ENCODE measurements at regions of chr2 and their contacts with region 1.

Region 1: GRCh38 chr2:157302492-157303099 is 23.0 kb downstream of the ERMN start:
- DNase-seq: peak; percentile 51
- H3K4me3 Mint-ChIP-seq: peak overlapping the region; percentile 3
- H3K27ac Mint-ChIP-seq: no peak overlapping the region
- H3K4me1 Mint-ChIP-seq: peaks cover 34% of the 10 kb centered on the region
- H3K27me3 Mint-ChIP-seq: no peaks in the 10 kb centered on the region

Region 2: DNA sequence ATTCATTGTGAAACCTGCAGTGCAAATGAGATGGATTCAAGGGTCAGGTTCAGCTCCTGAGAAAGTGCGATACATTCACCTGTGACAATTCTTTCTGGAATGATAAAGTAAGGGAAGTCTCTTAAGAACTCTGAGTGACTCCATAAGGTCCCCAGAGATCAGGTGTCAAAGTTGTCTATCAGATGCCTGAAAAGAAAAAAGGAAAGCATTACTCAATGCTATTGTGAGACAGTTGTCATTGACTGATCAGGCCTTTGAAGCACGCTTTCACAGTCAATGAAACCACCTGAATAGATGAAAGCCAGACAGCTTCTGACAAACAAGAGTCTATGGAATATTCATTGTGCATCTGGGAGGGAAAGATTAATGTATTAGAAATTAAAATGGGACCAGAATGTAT is 297.8 kb before region 1 on chr2:
- CTCF ChIA-PET with region 1: no interaction called
- intact Hi-C with region 1: no loop called
- DNase-seq: no peak
- H3K4me3 Mint-ChIP-seq: no peak overlapping the region
- H3K27ac Mint-ChIP-seq: no peak overlapping the region
- H3K4me1 Mint-ChIP-seq: no peaks in the 10 kb centered on the region
- H3K27me3 Mint-ChIP-seq: no peaks in the 10 kb centered on the region

Region 3: DNA sequence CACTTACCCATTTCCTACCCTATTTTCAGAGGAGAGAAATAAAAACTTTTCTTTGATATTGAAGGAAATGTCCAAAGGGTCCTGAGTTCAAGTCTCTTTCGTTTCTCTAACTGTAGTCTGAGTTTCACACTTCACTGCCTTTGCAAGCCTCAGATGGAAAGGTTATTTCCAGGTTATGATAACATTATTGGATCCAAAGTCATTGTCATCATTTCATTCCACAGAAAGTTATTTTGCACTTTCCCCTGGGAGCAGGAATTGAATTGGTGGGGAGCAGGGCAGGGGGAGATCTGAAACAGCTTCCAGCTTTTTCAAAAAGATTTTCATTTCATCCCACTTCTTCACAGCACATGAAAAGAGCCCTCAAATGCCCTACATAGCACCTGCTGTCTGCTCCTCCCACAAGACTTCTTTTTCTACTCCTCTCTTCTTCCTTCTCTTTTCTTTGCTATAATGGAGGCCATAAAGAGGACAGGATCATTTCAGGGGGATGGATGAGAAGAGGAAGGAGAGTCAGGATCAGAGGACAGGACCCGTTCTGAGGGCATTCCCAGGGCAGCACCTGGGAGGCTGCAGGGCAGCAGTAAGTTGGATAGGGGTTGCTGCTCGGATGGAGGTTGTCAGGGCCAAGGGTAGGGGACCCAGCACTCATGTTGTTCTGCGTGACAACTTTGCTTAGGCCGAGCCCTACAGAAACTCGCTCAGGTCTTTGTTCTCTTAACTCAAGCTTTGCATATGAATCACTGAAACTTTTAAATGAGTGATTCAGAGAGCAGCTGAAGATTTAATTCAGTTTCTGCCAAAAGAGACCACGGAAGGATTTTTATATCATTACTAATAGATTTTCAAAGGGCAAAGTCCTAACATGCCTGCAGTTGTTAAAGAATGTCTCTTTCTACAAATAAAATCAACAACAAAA is 56.5 kb before region 1 on chr2:
- CTCF ChIA-PET with region 1: no interaction called
- intact Hi-C with region 1: loop called (anchors 2 kb)
- DNase-seq: peak; percentile 49
- H3K4me3 Mint-ChIP-seq: no peak overlapping the region
- H3K27ac Mint-ChIP-seq: no peak overlapping the region
- H3K4me1 Mint-ChIP-seq: peaks cover 18% of the 10 kb centered on the region
- H3K27me3 Mint-ChIP-seq: peaks cover 7% of the 10 kb centered on the region

Region 4: DNA sequence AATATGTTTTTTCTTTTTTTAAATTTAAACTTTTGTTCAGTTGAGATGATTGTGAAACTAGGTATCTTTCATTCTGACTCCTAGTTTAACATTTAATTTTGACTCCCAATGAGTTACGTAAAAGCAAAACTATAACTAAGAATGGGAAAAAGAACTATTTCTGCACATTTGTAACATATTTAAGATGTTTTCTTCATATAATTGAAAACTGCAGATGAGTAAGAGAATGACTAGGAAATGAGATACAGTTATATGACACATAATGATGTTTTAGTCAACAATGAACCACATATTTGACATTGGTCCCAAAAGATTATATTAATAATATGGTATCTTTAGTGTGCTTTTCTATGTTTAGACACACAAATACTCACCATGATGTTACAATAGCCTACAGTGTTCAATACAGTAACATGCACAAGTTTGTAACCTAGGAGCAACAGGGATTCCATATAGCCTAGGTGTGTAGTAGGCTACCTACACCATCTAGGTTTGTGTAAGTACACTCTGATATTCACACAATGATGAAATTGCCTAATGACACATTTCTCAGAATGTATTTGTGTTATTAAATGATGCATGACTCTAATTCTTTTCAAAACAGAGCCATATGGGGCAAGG is 10.4 kb after region 1 on chr2:
- CTCF ChIA-PET with region 1: interaction called, 16 read pairs
- intact Hi-C with region 1: no loop called
- DNase-seq: peak; percentile 17
- H3K4me3 Mint-ChIP-seq: no peak overlapping the region
- H3K27ac Mint-ChIP-seq: peak overlapping the region; percentile 41
- H3K4me1 Mint-ChIP-seq: peaks cover 49% of the 10 kb centered on the region
- H3K27me3 Mint-ChIP-seq: no peaks in the 10 kb centered on the region

Region 5: GRCh38 chr2:157497638-157498314 is 195.2 kb after region 1 on chr2:
- CTCF ChIA-PET with region 1: interaction called, 142 read pairs
- intact Hi-C with region 1: loop called (anchors 1 kb)
- DNase-seq: peak; percentile 25
- H3K4me3 Mint-ChIP-seq: no peak overlapping the region
- H3K27ac Mint-ChIP-seq: no peak overlapping the region
- H3K4me1 Mint-ChIP-seq: peaks cover 23% of the 10 kb centered on the region
- H3K27me3 Mint-ChIP-seq: no peaks in the 10 kb centered on the region

Region 6: DNA sequence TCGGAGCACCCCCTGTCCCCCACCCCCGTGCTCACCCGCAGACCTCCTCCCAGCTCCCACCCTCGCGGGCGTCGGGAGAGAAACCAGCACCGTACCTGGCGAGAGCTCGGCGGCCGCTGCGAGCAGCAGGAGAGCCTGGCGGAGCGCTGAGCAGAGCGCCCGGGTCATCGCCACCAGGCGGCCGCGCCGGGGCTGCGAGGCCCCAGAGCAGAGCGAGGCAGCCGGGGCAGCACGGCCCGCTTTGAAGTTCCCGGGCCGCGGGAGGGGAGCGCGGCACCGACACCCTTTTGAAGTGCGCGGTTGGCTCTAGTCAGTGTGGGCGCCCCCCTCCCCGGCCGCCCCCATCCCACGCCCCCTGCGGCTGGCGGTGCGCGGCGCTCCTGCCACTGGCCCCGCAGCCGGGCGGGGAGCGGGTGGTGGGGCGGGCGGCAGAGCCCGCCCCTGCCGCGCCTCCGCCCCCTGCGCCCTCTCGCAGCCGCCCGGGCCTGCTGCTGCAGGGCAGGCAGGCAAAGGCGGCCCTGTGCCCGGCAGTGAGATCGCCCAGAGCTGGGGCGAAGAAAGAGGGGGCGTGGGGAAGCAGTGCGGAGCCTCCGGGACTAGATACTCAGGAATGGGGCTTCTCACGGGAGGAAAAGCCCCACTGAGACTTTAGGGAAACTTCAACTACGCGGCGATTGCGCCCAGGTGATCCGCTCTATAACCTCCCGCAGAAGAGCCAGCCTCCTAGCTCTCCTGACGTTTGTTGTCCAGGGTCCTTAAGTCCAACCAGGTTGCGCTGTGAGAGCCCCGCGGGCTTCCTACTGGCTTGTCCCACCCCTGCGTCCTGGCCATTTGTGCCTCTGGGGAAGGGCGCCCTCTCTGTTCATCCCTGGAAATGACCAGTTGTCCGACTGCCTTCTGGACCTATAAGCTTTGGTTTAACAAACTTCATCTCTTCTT is 326.1 kb after region 1 on chr2 and contains the start of gene ACVR1C:
- CTCF ChIA-PET with region 1: interaction called, 52 read pairs
- intact Hi-C with region 1: loop called (anchors 1 kb)
- DNase-seq: peak; percentile 83
- H3K4me3 Mint-ChIP-seq: peak within 1 kb of the TSS; percentile 94
- H3K27ac Mint-ChIP-seq: no peak within 1 kb of the TSS
- H3K4me1 Mint-ChIP-seq: peaks cover 37% of the 10 kb centered on the region
- H3K27me3 Mint-ChIP-seq: peaks cover 2% of the 10 kb centered on the region
- total RNA-seq, gene ACVR1C: 3.5 to 3.6 TPM

Region 7: GRCh38 chr2:157784169-157784822 is 481.7 kb after region 1 on chr2:
- CTCF ChIA-PET with region 1: interaction called, 3 read pairs
- intact Hi-C with region 1: loop called (anchors 2 kb)
- DNase-seq: peak; percentile 47
- H3K4me3 Mint-ChIP-seq: no peak overlapping the region
- H3K27ac Mint-ChIP-seq: peak overlapping the region; percentile 62
- H3K4me1 Mint-ChIP-seq: peaks cover 38% of the 10 kb centered on the region
- H3K27me3 Mint-ChIP-seq: no peaks in the 10 kb centered on the region

Region 8: GRCh38 chr2:157871415-157871814 is 568.8 kb after region 1 on chr2:
- CTCF ChIA-PET with region 1: no interaction called
- intact Hi-C with region 1: no loop called
- DNase-seq: no peak
- H3K4me3 Mint-ChIP-seq: no peak overlapping the region
- H3K27ac Mint-ChIP-seq: no peak overlapping the region
- H3K4me1 Mint-ChIP-seq: peaks cover 76% of the 10 kb centered on the region
- H3K27me3 Mint-ChIP-seq: no peaks in the 10 kb centered on the region